Left cardiac atrium (tissue), 4 donors: ENCODE measurements at regions of chr1 and their contacts with region 1.

Region 1: GRCh38 chr1:116485071-116485735 is 85.6 kb downstream of the CD58 start:
- DNase-seq: peak; percentile 93
- ATAC-seq: peak; percentile 85 to 92

Region 2: DNA sequence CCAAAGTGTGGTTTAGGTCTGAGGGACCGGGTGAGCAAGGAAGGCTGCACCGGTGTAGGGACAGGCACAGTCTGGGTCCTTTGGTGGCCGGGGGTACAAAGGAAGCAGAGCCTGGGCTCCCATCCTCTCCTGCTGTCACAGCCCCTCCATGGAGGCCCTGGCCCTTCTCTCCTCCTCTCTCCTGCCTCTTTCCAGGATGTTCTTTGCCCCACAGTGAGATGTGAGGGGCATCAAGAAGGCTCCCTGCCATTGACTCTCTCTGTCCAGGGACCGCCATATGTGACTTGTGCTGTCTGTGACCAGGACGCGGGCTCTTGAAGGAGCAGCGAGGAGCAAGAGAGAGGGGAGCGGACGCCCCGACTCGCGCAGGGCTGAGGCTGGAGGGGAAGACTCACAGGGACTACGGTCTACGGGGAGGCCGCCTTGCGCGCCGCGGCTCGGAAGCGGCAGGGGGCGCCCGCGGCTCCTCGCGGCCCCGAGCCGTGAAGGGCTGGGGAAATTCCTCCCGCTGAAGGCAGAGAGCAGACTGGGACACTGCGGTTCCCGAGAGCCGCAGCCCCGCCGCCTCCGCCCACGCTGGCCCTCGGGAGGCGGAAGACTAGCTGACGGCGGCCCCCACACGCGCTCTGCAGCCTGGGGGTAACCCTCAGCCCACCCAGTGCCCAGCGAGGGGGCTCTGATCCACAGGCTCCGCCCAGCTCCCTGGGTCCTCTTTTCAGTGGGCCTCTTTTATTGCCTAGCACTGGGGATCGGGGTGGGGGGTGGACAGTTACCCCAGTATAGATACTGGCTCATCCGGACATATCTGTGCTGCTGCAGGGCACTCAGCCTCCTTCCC is 333.2 kb before region 1 on chr1:
- intact Hi-C with region 1: loop called (anchors 2 to 5 kb)
- DNase-seq: peak; percentile 81
- ATAC-seq: peak; percentile 98

Region 3: DNA sequence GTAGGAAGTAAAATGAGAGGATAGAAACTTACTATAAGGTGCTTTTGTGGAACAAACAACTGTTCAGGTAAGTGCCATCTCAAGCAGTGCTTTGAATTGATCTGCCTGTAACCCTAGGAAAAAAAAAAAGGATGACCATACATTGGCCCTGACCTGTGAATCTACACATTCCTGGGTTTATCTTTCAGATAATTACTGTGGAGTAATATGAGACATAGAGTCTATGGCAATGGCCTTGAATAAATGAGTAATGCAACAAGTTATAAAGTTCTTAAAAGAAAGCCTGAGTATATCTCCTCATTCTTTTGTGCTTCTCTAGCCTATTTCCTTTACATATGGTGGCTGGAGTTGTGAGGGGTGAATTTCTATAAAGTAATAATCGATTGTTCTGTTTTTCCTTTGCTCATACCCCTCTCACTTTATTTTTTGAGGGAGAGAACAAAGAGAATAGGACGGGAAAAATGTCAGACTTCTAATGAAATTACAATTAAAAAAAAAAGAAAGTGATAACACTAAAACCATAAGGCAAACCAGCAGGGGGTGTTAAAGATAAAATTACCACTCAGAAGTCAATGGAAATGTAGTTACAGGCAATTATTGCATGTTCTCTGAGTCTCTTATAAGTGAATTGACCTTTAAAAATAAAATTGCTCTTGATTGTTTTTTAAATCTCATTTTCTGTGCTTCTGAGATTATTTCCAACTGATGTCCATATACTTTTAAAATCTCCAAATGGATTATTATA is 124.6 kb before region 1 on chr1:
- intact Hi-C with region 1: loop called in 1 of 2 experiments (anchors 5 kb)
- DNase-seq: no peak
- ATAC-seq: no peak

Region 4: DNA sequence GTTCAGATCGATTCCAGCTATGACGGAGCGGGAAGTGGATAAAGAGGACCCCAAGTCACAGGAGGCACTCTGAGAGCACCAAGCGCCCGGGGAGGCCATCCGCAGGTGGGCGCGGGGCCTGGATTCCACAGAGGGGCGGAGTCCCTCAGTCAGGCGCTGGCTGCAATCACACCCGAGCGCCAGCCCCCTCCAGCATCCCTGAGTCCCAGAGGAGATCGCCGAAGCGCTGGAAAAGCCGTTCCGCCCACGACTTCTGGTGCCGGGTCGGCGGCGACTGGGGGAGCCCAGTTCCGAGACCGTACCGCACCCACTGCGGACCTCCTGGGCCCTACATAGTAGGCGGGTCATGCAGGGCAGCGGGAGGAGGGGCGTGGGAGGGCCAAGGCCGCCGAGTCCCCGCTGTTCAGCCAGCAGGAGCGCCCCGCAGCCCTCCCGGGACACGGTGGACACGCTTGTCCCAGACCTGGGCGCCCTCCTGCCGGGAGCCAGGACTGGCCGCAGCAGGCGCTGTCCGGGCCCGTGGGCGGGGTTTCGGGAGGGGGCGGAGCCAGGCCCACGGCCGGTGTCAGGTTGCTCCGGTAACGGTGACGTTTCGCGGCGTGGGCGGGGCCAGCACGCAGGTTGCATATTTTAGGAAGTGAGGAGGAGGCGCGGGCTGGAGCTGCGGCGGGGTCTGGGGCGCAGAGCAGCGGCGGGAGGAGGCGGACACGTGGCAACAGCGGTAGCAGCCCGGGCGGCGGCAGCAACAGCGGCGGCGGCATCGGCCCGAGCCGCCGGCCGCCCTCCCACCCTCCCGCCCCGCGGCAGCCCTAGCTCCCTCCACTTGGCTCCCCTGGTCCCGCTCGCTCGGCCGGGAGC is 112.4 kb before region 1 on chr1 and contains the start of gene ATP1A1:
- intact Hi-C with region 1: loop called in 1 of 2 experiments (anchors 10 kb)
- DNase-seq: peak; percentile 98
- ATAC-seq: peak; percentile 87 to 90
- total RNA-seq, gene ATP1A1: 183 to 281 TPM